OCI-LY7 (cell line): ENCODE measurements at regions of chr10 and their contacts with region 1.

Region 1: DNA sequence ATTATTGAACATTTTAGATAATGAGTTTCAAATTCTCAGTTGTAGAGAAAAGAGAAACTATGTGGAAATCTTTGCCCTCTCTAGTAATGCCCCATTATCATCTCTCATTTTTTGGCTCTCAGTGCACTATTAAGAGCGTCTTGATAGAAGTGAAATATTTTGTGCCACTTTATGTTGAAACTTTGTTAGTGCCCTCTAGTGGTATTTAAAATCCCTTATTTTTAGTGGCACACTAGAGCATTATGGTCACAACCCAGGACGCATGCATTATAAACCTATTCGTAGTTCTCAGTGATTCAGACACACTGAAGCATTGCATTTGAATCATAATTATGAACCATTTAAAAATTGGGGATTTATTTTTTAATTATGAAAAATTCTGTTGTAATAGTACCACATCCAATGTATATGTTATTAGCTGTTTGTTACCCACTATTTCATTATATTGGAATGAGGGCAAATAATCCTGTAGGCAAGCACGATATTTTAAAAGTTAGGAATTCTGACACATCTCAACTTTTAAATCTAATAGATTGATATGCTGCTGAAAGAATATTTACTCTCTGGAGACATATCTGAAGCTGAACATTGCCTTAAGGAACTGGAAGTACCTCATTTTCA is 21.9 kb downstream of the PDCD4 start:
- DNase-seq: peak; percentile 85
- H3K4me3 ChIP-seq: no peak overlapping the region
- H3K27ac ChIP-seq: no peak overlapping the region
- H3K4me1 ChIP-seq: peaks cover 4% of the 10 kb centered on the region
- CTCF ChIP-seq: peak; percentile 92

Region 2: DNA sequence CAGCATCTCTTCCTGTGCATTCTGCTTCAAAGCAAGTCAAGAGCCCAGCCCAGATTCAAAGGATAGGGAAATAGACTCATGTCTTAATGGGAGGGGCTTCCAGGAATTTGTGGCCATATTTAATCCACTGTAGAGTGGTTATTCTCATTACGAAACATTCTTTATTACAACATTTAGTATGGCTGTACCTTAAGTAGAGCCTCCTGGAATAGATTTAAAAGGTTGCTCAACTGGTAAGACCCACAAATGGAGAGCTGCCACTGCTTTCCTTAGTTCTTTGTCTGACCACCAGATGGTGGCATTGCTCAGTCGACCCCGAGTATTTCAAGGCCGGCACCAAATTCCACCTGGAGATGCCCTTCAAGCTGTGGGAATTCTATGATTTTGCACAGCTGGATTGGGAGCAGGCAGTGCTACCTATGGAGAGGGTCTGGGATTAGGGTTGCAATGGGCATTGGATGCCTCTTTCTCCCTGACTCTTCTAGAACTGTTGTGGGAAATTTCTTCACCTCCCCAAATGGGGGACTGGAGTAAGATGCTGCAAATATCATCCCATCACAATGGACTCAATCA is 147.3 kb before region 1 on chr10:
- CTCF ChIA-PET with region 1: interaction called, 3 read pairs
- POLR2A ChIA-PET with region 1: no interaction called
- intact Hi-C with region 1: loop called (anchors 1 kb)
- DNase-seq: peak; percentile 71
- H3K4me3 ChIP-seq: no peak overlapping the region
- H3K27ac ChIP-seq: no peak overlapping the region
- H3K4me1 ChIP-seq: peaks cover 58% of the 10 kb centered on the region
- CTCF ChIP-seq: peak; percentile 99

Region 3: DNA sequence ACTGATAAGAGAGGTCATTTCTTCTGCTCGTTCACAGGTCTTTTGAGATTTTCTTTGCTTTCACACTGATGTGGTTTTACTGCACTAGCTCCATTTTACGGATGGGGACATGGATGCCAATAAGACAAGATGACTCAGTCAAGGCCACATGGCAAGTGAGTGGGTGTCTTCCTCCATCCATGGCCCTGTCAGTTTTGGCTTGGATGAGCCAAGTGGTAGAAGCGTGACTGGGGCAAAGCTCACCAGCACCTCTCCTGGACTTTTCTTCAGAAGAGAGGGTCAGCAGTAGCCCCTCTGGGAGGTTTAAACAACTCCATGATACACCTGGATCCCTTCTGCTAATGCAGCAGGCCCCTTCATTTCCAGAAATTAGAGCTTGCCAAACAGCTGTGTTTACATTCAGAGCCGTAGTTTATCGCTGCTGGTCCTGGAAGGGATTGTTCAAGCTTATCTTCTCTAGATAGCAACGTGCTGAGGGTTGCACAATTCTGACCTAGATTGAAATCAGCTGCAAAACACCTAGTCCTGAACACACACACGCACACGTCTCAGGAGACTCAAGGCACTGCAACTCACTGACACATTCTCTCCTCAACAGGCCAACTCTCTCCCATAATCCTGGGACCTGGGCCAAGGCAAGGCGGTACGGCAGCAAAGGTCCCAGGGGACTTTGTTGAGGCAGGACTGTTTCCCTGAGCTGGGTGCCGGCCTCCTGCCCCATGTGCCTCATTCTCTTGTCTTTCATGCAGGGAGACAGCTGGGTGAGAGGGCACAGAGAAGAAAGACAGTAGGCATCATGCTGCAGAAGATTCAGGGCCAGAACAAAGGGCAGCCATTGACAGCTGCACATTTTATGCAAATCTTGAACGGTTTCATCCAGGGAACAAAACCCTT is 36.2 kb before region 1 on chr10:
- CTCF ChIA-PET with region 1: no interaction called
- POLR2A ChIA-PET with region 1: interaction called, 4 read pairs
- intact Hi-C with region 1: loop called (anchors 1 kb)
- DNase-seq: peak; percentile 84
- H3K4me3 ChIP-seq: peak overlapping the region; percentile 11
- H3K27ac ChIP-seq: peak overlapping the region; percentile 91
- H3K4me1 ChIP-seq: peaks cover 75% of the 10 kb centered on the region
- CTCF ChIP-seq: no peak

Region 4: GRCh38 chr10:110864662-110865140 is 29.0 kb before region 1 on chr10:
- CTCF ChIA-PET with region 1: interaction called, 3 read pairs
- POLR2A ChIA-PET with region 1: interaction called, 11 read pairs
- intact Hi-C with region 1: no loop called
- DNase-seq: peak; percentile 89
- H3K4me3 ChIP-seq: peak overlapping the region; percentile 60
- H3K27ac ChIP-seq: peak overlapping the region; percentile 92
- H3K4me1 ChIP-seq: peaks cover 100% of the 10 kb centered on the region
- CTCF ChIP-seq: no peak

Region 5: GRCh38 chr10:110912374-110912773 is 18.7 kb after region 1 on chr10:
- CTCF ChIA-PET with region 1: no interaction called
- POLR2A ChIA-PET with region 1: interaction called, 14 read pairs
- intact Hi-C with region 1: no loop called
- DNase-seq: no peak
- H3K4me3 ChIP-seq: no peak overlapping the region
- H3K27ac ChIP-seq: no peak overlapping the region
- H3K4me1 ChIP-seq: peaks cover 32% of the 10 kb centered on the region
- CTCF ChIP-seq: no peak

Region 6: DNA sequence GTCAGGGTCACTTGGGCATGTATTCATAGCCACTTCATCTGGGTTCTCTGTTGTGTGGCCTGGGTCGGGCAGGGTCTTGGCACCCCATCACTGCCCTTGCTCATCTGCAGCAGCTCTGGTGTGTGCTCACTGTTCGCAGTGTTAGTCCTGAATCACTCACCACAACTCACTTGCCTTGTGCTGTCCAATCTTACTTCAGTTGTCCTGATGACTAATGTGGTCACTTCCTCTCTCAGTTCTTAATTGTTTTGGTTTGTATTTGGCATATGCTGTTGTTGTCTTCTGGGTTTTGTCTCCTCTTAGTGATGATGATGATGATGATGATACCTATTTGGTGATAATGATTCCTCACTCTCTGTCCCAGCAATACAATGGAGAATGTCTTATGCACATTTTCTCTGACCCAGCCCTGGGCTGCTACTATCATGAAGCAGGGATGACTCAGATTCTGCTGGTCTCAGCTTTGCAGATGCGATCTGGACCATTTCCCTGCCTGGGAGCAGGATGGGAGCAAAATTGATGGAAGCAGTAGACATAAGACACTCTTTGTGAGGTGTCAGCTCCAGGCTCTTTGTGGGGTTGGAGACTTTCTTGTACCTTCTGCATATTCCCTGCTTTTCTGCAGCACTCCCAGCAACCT is 200.2 kb after region 1 on chr10:
- CTCF ChIA-PET with region 1: no interaction called
- POLR2A ChIA-PET with region 1: no interaction called
- intact Hi-C with region 1: loop called (anchors 10 kb)
- DNase-seq: no peak
- H3K4me3 ChIP-seq: no peak overlapping the region
- H3K27ac ChIP-seq: no peak overlapping the region
- H3K4me1 ChIP-seq: no peaks in the 10 kb centered on the region
- CTCF ChIP-seq: no peak

Region 7: DNA sequence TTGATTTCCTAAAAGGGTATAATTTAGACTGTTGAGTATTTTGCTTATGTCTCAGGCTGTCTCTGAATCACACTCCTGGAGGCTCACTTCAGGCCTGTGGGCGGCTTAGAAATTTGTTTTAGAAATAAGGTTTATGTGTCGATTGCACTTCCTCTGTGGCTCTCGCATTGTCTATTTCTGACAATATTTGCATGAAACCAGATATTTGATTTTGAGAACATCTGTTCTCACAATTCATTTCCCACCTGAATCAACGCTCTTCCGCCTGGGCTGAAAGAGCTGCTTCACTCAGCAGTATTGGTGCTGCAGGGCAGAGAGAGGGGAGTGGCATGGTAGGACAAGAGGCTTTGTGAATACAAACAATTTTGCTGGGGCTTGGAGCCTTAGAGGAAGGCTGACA is 445.1 kb after region 1 on chr10:
- CTCF ChIA-PET with region 1: no interaction called
- POLR2A ChIA-PET with region 1: no interaction called
- intact Hi-C with region 1: loop called (anchors 10 kb)
- DNase-seq: peak; percentile 71
- H3K4me3 ChIP-seq: no peak overlapping the region
- H3K27ac ChIP-seq: no peak overlapping the region
- H3K4me1 ChIP-seq: peaks cover 20% of the 10 kb centered on the region
- CTCF ChIP-seq: no peak